ENCODE measurements at regions of chr2 and their contacts with region 1.

Region 1: DNA sequence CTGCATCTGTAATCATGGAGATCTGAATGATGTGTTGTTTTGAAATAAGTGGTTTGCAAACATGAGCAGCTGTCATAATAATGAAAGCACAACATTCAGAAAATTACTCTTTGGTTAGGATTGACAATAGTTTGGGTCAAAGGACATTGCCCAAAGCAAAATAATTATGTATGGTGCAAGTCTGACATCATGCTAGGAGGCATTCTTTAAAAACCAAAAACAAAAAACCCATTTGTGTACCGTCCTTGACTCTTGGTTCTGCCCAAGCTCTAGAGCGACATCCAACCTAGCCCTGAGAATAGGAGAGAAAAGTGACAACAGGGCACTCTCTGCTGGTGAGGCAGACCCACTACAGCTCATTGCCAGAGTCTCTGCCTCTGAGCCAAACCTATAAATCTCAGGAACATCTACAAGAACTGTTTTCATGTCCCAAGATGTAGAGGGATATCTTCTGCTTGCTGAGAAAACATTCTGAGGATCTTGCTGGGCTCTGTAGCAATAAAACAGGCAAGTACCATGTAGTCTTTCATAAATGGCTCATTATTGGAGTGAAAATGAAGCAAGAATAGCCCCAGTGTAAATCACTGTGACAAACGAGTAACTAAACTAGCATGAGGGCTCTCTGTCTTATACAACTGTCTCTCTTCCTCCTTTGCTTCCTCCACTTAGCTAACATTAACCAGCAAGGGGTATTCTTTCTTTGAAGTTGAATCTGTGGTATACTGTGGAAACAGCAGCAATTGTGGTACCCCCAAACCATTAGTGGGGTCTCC is 266.8 kb upstream of the CXCR4 start:
- DNase-seq: no peak
- ATAC-seq: peak; percentile 68
- H3K4me3 ChIP-seq: no peak overlapping the region
- H3K27ac ChIP-seq: no peak overlapping the region
- H3K4me1 ChIP-seq: peaks cover 21% of the 10 kb centered on the region
- H3K27me3 ChIP-seq: no peaks in the 10 kb centered on the region
- CTCF ChIP-seq: peak; percentile 83 to 92 (median 87)
- EP300 ChIP-seq: peak; percentile 28 to 37; a peak in 1 of 4 replicates
- POLR2A ChIP-seq: no peak
- RAD21 ChIP-seq: peak; percentile 91

Region 2: GRCh38 chr2:134988994-134989605 is 1395.6 kb before region 1 on chr2:
- CTCF ChIA-PET with region 1: no interaction called
- POLR2A ChIA-PET with region 1: no interaction called
- RAD21 ChIA-PET with region 1: interaction called, 7 read pairs
- SMC1A ChIA-PET with region 1: no interaction called
- in situ Hi-C with region 1: loop called (anchors 25 kb)
- intact Hi-C with region 1: no loop called
- DNase-seq: no peak
- ATAC-seq: peak; percentile 75
- H3K4me3 ChIP-seq: no peak overlapping the region
- H3K27ac ChIP-seq: no peak overlapping the region
- H3K4me1 ChIP-seq: no peaks in the 10 kb centered on the region
- H3K27me3 ChIP-seq: no peaks in the 10 kb centered on the region
- CTCF ChIP-seq: peak; percentile 26 to 47 (median 32); a peak in 5 of 6 replicates
- EP300 ChIP-seq: no peak
- POLR2A ChIP-seq: no peak
- RAD21 ChIP-seq: peak; percentile 59

Region 3: GRCh38 chr2:135820003-135820618 is 564.6 kb before region 1 on chr2:
- CTCF ChIA-PET with region 1: interaction called, 13 read pairs
- POLR2A ChIA-PET with region 1: no interaction called
- RAD21 ChIA-PET with region 1: interaction called, 13 read pairs
- SMC1A ChIA-PET with region 1: interaction called, 6 read pairs
- in situ Hi-C with region 1: no loop called
- intact Hi-C with region 1: loop called (anchors 2 kb)
- DNase-seq: peak; percentile 48
- ATAC-seq: peak; percentile 91
- H3K4me3 ChIP-seq: peak overlapping the region; percentile 63
- H3K27ac ChIP-seq: peak overlapping the region; percentile 93
- H3K4me1 ChIP-seq: peaks cover 37% of the 10 kb centered on the region
- H3K27me3 ChIP-seq: no peaks in the 10 kb centered on the region
- CTCF ChIP-seq: no peak
- EP300 ChIP-seq: 0 out of 4 replicates have a peak, but pooled peaks of 1 of the 2 experiments have one; percentile 18
- POLR2A ChIP-seq: peak; percentile 67
- RAD21 ChIP-seq: 0 out of 2 replicates have a peak, but pooled peaks have one; percentile 18

Region 4: GRCh38 chr2:135931776-135932443 is 452.8 kb before region 1 on chr2:
- CTCF ChIA-PET with region 1: interaction called, 14 read pairs
- POLR2A ChIA-PET with region 1: interaction called, 3 read pairs
- RAD21 ChIA-PET with region 1: interaction called, 9 read pairs
- SMC1A ChIA-PET with region 1: interaction called, 10 read pairs
- in situ Hi-C with region 1: no loop called
- intact Hi-C with region 1: no loop called
- DNase-seq: no peak
- ATAC-seq: peak; percentile 95
- H3K4me3 ChIP-seq: no peak overlapping the region
- H3K27ac ChIP-seq: no peak overlapping the region
- H3K4me1 ChIP-seq: peaks cover 6% of the 10 kb centered on the region
- H3K27me3 ChIP-seq: no peaks in the 10 kb centered on the region
- CTCF ChIP-seq: no peak
- EP300 ChIP-seq: peak; percentile 45 to 53; a peak in 2 of 4 replicates
- POLR2A ChIP-seq: no peak
- RAD21 ChIP-seq: no peak

Region 5: DNA sequence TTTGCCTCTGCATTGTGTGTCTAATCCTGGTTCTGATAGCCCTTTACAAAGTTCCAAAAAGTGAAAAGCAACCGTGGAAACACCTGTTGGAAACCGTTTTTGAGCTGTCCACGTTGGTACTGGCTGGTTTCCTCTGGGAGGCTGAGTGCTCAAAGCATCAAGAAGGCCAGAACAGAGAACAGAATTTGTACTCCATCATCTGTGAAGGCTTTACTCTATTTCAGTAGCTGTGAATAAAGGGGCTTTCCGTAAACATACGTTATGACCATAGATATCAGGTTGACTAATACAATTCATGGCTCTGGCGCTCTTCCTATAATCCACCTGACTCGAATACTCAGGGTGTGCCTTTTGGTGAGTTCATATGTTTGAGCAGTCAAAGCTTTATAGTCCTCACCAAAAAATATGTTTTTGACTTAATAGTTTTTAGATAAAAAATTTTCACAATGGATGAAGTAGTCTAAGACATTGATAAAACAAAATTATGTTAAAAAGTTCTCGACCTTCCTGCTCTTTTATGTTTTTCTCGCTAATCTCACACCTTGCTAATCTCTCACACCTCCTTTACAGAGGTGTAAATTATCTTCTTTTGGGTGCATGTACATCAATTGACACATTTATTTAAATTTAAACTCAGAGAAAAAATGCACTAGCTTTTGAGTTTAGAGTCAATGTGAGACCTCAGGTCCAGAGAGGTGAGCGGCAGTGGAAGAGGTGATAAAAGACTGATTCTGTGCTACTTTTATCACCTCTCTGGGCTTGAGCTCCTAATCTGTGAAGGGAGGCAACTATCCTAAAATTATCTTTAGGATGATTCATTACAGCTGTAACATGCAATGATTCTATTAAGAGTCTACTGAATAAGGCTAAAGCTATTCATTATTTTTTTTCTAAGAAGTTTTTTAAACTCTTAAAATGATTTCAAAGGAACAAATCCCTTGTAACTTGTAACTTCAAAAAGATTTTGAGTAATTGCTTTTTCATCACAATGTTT is 332.1 kb before region 1 on chr2:
- CTCF ChIA-PET with region 1: interaction called, 12 read pairs
- POLR2A ChIA-PET with region 1: interaction called, 5 read pairs
- RAD21 ChIA-PET with region 1: interaction called, 244 read pairs
- SMC1A ChIA-PET with region 1: interaction called, 272 read pairs
- in situ Hi-C with region 1: loop called (anchors 5 kb)
- intact Hi-C with region 1: loop called (anchors 2 kb)
- DNase-seq: no peak
- ATAC-seq: peak; percentile 67
- H3K4me3 ChIP-seq: no peak overlapping the region
- H3K27ac ChIP-seq: peak overlapping the region; percentile 42
- H3K4me1 ChIP-seq: peaks cover 36% of the 10 kb centered on the region
- H3K27me3 ChIP-seq: no peaks in the 10 kb centered on the region
- CTCF ChIP-seq: no peak
- EP300 ChIP-seq: peak in 1 of 2 experiments; percentile 77; a peak in 2 of 4 replicates
- POLR2A ChIP-seq: no peak
- RAD21 ChIP-seq: 0 out of 2 replicates have a peak, but pooled peaks have one; percentile 1

Region 6: DNA sequence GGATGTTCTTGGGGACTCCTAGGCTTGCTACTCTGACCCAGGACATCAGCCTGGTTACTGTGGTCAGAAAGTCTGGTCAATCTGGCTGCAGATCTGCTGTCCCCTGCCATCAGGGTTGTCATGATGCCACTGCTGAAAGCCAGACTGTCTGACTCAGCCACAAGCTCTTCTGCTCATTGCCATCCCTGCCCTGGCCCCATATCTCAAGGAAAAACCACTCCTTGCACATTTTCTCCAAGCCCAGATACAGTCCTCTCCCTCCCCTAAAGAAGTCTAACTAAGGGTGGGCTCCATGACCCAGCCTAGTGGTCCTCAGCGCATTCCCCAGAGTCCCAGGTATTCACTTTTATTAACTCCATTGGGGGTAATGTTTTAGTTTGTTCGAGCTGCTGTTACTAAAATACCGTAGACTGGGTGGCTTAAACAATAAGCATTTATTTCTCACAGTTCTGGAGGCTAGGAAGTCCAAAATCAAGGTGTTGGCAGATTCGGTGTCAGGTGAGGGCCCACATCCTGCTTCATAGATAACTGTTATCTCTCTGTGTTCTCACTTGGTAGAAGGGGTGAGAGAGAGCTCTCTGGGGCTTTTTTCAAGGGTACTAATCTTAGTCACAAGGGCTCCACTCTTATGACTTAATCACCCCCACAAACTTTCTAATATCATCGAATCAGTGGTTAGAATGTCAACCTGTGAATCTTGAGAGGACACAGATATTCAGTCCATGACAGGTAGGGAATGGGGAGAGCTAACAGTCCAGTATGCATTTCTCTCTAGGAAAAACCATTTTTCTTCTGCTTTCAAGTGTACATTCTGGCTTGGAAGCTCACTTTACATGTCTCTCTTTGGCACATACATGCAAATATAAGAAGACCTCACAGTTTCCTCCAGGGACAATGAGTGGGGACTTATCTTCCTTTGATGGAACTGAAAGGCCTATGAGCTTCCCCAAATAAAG is 172.0 kb before region 1 on chr2:
- CTCF ChIA-PET with region 1: interaction called, 8 read pairs
- POLR2A ChIA-PET with region 1: interaction called, 5 read pairs
- RAD21 ChIA-PET with region 1: interaction called, 17 read pairs
- SMC1A ChIA-PET with region 1: interaction called, 32 read pairs
- in situ Hi-C with region 1: no loop called
- intact Hi-C with region 1: loop called (anchors 2 kb)
- DNase-seq: peak; percentile 34
- ATAC-seq: peak; percentile 83
- H3K4me3 ChIP-seq: no peak overlapping the region
- H3K27ac ChIP-seq: no peak overlapping the region
- H3K4me1 ChIP-seq: peaks cover 4% of the 10 kb centered on the region
- H3K27me3 ChIP-seq: peaks cover 0 to 8% of the 10 kb centered on the region in 2 experiments; a peak in 2 of 4 replicates
- CTCF ChIP-seq: no peak
- EP300 ChIP-seq: peak in 1 of 2 experiments; percentile 78; a peak in 3 of 4 replicates
- POLR2A ChIP-seq: no peak
- RAD21 ChIP-seq: no peak

Region 7: GRCh38 chr2:136327162-136327852 is 57.4 kb before region 1 on chr2:
- CTCF ChIA-PET with region 1: interaction called, 13 read pairs
- POLR2A ChIA-PET with region 1: interaction called, 4 read pairs
- RAD21 ChIA-PET with region 1: interaction called, 63 read pairs
- SMC1A ChIA-PET with region 1: interaction called, 19 read pairs
- in situ Hi-C with region 1: no loop called
- intact Hi-C with region 1: loop called (anchors 1 kb)
- DNase-seq: peak; percentile 71
- ATAC-seq: peak; percentile 89
- H3K4me3 ChIP-seq: peak overlapping the region; percentile 37; the same call in 1 of the 2 replicates
- H3K27ac ChIP-seq: no peak overlapping the region
- H3K4me1 ChIP-seq: peaks cover 26% of the 10 kb centered on the region
- H3K27me3 ChIP-seq: 0 out of 4 replicates have a peak, but pooled peaks cover 0 to 2% of the 10 kb centered on the region in 2 experiments
- CTCF ChIP-seq: no peak
- EP300 ChIP-seq: peak; percentile 95 to 96; a peak in 3 of 4 replicates
- POLR2A ChIP-seq: no peak
- RAD21 ChIP-seq: no peak

Region 8: GRCh38 chr2:136468799-136469369 is 84.2 kb after region 1 on chr2:
- CTCF ChIA-PET with region 1: no interaction called
- POLR2A ChIA-PET with region 1: no interaction called
- RAD21 ChIA-PET with region 1: no interaction called
- SMC1A ChIA-PET with region 1: no interaction called
- in situ Hi-C with region 1: no loop called
- intact Hi-C with region 1: no loop called
- DNase-seq: no peak
- ATAC-seq: no peak
- H3K4me3 ChIP-seq: no peak overlapping the region
- H3K27ac ChIP-seq: no peak overlapping the region
- H3K4me1 ChIP-seq: no peaks in the 10 kb centered on the region
- H3K27me3 ChIP-seq: no peaks in the 10 kb centered on the region; a peak in 2 of 4 replicates
- CTCF ChIP-seq: no peak
- EP300 ChIP-seq: no peak
- POLR2A ChIP-seq: no peak
- RAD21 ChIP-seq: no peak

Measured in GM12878 (cell line).